ENCODE measurements at regions of chr12 and their contacts with region 1.

Region 1: DNA sequence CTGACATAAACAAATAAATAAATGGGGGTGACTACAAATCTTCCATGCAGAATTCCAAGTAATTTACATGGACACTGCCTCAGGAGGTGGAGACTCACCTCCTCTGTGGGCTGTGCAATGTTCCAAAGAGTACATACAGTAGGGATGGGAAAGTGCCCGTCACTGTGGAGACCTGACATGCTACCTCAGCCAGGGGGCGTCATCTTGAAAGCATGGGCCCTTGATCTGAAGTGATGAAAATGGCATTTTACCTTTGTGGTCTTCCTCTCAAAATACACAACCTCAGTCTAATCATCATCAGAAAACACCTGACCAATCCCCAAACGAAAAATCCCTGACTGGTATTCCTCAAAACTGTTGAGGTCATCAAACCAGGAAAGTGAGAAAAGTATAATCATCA is 48.4 kb downstream of the ANAPC7 start:
- DNase-seq: peak; percentile 55
- ATAC-seq: peak; percentile 62
- H3K4me3 ChIP-seq: no peak overlapping the region
- H3K4me3 Mint-ChIP-seq: no peak overlapping the region
- H3K27ac ChIP-seq: no peak overlapping the region
- H3K27ac Mint-ChIP-seq: no peak overlapping the region
- H3K4me1 ChIP-seq: peaks cover 2 to 6% of the 10 kb centered on the region in 2 donors
- H3K4me1 Mint-ChIP-seq: peaks cover 15% of the 10 kb centered on the region
- H3K27me3 ChIP-seq: peaks cover 0 to 3% (median 0%) of the 10 kb centered on the region in 4 experiments
- H3K27me3 Mint-ChIP-seq: no peaks in the 10 kb centered on the region
- CTCF ChIP-seq: peak; percentile 61

Region 2: GRCh38 chr12:110371408-110372055 is 16.5 kb after region 1 on chr12:
- CTCF ChIA-PET with region 1: interaction called, 10 read pairs
- POLR2A ChIA-PET with region 1: no interaction called
- intact Hi-C with region 1: no loop called
- DNase-seq: peak; percentile 83
- ATAC-seq: peak; percentile 93
- H3K4me3 ChIP-seq: no peak overlapping the region
- H3K4me3 Mint-ChIP-seq: peak overlapping the region; percentile 49
- H3K27ac ChIP-seq: peak overlapping the region in 1 of 2 donors; percentile 58
- H3K27ac Mint-ChIP-seq: peak overlapping the region; percentile 83
- H3K4me1 ChIP-seq: peaks cover 18 to 30% of the 10 kb centered on the region in 2 donors
- H3K4me1 Mint-ChIP-seq: peaks cover 41% of the 10 kb centered on the region
- H3K27me3 ChIP-seq: no peaks in the 10 kb centered on the region
- H3K27me3 Mint-ChIP-seq: no peaks in the 10 kb centered on the region
- CTCF ChIP-seq: no peak